Caco-2 (cell line): ENCODE measurements at regions of chr18 and their contacts with region 1.

Region 1: DNA sequence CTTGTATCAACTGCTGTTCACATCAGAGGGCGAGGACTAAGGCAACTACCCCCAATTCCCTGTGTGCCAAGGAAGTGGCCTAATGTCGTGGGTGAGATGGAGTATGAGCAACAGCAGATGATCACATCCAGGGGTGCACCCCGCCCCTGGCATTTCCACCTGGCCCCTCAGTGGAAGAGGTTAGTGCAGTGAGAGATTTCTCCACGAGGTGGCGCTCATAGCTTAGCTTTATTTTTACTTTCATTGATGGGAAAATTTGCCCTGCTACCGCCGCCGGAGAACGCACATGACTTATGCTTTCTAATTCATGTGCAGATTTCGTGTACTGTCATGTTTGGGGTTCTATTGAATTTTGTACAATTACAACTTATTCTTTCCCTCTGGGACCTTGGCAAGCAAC is 470.6 kb upstream of the MEX3C start:
- DNase-seq: peak; percentile 35 to 45
- H3K4me3 ChIP-seq: no peak overlapping the region
- H3K4me3 Mint-ChIP-seq: no peak overlapping the region
- H3K27ac Mint-ChIP-seq: no peak overlapping the region
- H3K4me1 ChIP-seq: no peaks in the 10 kb centered on the region
- H3K4me1 Mint-ChIP-seq: no peaks in the 10 kb centered on the region
- H3K27me3 ChIP-seq: no peaks in the 10 kb centered on the region; the same call in 1 of the 2 replicates
- H3K27me3 Mint-ChIP-seq: peaks cover 11% of the 10 kb centered on the region
- CTCF ChIP-seq: peak; percentile 43

Region 2: DNA sequence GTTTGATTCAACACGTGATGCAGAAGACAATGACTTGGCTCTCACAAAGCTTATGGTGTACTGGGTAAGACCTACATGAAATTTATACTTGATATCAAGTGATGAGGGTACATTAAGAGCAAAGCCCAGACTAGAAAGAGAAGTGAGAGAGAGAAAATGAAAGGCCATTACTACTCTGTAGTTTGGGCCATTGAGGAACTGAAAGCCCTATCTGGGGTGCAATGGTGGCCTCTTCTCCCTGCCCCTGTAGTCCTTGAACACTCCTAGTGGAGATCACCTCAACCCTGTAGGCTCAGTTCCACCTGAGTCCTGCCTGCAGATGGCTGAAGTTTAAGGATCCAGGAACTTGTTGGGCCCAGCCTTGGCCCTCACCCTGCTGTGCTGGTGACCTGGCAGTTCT is 99.2 kb after region 1 on chr18:
- CTCF ChIA-PET with region 1: no interaction called
- POLR2A ChIA-PET with region 1: no interaction called
- intact Hi-C with region 1: no loop called
- DNase-seq: no peak
- H3K4me3 ChIP-seq: no peak overlapping the region
- H3K4me3 Mint-ChIP-seq: no peak overlapping the region
- H3K27ac Mint-ChIP-seq: no peak overlapping the region
- H3K4me1 ChIP-seq: no peaks in the 10 kb centered on the region
- H3K4me1 Mint-ChIP-seq: peaks cover 4% of the 10 kb centered on the region
- H3K27me3 ChIP-seq: no peaks in the 10 kb centered on the region
- H3K27me3 Mint-ChIP-seq: peaks cover 9% of the 10 kb centered on the region
- CTCF ChIP-seq: no peak

Region 3: GRCh38 chr18:52288403-52289004 is 620.4 kb after region 1 on chr18:
- CTCF ChIA-PET with region 1: interaction called, 4 read pairs
- POLR2A ChIA-PET with region 1: no interaction called
- intact Hi-C with region 1: loop called (anchors 1 kb)
- DNase-seq: peak; percentile 21 to 37
- H3K4me3 ChIP-seq: no peak overlapping the region
- H3K4me3 Mint-ChIP-seq: no peak overlapping the region
- H3K27ac Mint-ChIP-seq: no peak overlapping the region
- H3K4me1 ChIP-seq: no peaks in the 10 kb centered on the region
- H3K4me1 Mint-ChIP-seq: no peaks in the 10 kb centered on the region
- H3K27me3 ChIP-seq: no peaks in the 10 kb centered on the region
- H3K27me3 Mint-ChIP-seq: no peaks in the 10 kb centered on the region
- CTCF ChIP-seq: peak; percentile 54 to 62

Region 4: DNA sequence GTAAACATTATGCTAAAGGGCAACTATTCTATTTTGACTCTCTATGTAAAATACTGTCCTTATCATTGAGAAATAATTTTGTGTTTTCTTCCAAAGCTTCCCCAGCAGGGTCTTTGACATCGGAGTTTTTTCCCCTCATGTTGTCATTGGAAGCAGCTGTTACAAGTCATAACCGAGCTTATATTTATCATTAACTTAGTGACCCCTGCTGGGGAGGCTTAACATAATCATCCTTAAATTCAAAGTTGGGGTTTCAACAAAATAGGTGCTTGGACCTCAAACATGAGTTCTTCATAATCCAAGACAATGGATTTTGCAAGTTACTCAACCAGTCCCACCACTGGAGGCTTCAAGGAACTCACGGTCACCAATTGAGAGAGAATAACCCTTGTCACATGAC is 1002.8 kb after region 1 on chr18:
- CTCF ChIA-PET with region 1: no interaction called
- POLR2A ChIA-PET with region 1: no interaction called
- intact Hi-C with region 1: loop called (anchors 5 kb)
- DNase-seq: peak in 1 of 2 experiments; percentile 1
- H3K4me3 ChIP-seq: no peak overlapping the region
- H3K4me3 Mint-ChIP-seq: no peak overlapping the region
- H3K27ac Mint-ChIP-seq: no peak overlapping the region
- H3K4me1 ChIP-seq: no peaks in the 10 kb centered on the region
- H3K4me1 Mint-ChIP-seq: no peaks in the 10 kb centered on the region
- H3K27me3 ChIP-seq: no peaks in the 10 kb centered on the region
- H3K27me3 Mint-ChIP-seq: no peaks in the 10 kb centered on the region
- CTCF ChIP-seq: peak in 1 of 2 experiments; percentile 12